SK-N-SH (cell line): ENCODE measurements at regions of chr11 and their contacts with region 1.

Region 1: GRCh38 chr11:78961247-78961646 is 386.6 kb upstream of the NARS2 start:
- DNase-seq: peak; percentile 66
- H3K4me3 ChIP-seq: peak overlapping the region; percentile 58 to 68; a peak in 3 of 4 replicates
- H3K27ac ChIP-seq: peak overlapping the region in 1 of 2 experiments; percentile 87; a peak in 2 of 4 replicates
- H3K4me1 ChIP-seq: peaks cover 10 to 46% of the 10 kb centered on the region in 2 experiments; a peak in 3 of 4 replicates
- H3K27me3 ChIP-seq: no peaks in the 10 kb centered on the region
- CTCF ChIP-seq: peak; percentile 58
- EP300 ChIP-seq: no peak
- RAD21 ChIP-seq: peak; percentile 81

Region 2: DNA sequence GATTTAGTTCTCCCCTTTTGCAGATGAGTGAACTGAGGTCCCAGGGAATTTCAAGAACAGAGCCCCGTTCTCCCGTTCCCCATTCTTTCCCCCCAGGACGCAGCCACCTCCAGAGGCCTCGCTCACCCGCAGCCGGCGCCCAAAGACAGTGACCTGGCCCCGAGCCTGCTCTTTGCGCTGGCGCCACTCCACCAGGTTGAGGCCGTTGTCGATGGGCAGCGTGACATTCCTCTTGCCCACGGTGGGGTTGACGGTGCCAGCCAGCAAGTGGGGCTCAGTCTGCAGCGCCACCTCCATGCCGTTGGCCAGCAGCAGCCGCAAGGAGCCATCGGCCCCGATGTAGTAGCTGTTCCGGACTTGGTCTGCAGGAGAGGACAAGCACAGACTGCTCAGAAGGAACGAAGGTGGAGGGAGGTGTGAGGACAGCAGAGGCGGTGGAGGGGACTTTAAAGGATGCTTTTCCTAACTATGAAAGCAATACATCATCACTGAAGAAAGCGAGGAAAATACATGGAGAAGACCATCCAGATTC is 285.2 kb before region 1 on chr11:
- CTCF ChIA-PET with region 1: no interaction called
- POLR2A ChIA-PET with region 1: no interaction called
- DNase-seq: no peak
- H3K4me3 ChIP-seq: no peak overlapping the region
- H3K27ac ChIP-seq: no peak overlapping the region; a peak in 1 of 4 replicates
- H3K4me1 ChIP-seq: no peaks in the 10 kb centered on the region
- H3K27me3 ChIP-seq: no peaks in the 10 kb centered on the region
- CTCF ChIP-seq: no peak
- EP300 ChIP-seq: no peak
- RAD21 ChIP-seq: no peak

Region 3: DNA sequence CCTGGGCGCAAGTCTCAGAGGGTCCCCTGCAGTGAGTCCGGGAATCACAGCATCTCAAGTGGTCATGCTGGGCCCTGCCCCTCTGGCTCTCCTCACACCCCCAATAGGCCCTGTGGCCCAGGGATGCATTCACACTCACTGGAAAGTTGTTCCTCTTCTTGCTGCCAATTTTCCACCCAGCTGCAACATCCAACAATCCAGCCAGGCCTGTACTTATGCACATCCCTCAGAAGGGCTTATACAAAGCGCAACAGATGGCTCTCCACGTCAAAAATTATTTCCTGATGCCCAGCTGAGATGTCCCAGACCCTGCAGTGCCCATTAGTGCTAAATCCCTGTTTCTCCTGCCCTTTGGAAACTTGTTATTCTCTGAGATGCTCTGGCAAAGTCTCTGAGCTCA is 21.2 kb after region 1 on chr11:
- CTCF ChIA-PET with region 1: interaction called, 18 read pairs
- POLR2A ChIA-PET with region 1: interaction called, 15 read pairs
- DNase-seq: peak; percentile 72
- H3K4me3 ChIP-seq: no peak overlapping the region
- H3K27ac ChIP-seq: peak overlapping the region; percentile 75 to 100
- H3K4me1 ChIP-seq: peaks cover 13 to 68% of the 10 kb centered on the region in 2 experiments; a peak in 3 of 4 replicates
- H3K27me3 ChIP-seq: no peaks in the 10 kb centered on the region
- CTCF ChIP-seq: no peak
- EP300 ChIP-seq: peak; percentile 95 to 100
- RAD21 ChIP-seq: peak; percentile 49

Region 4: GRCh38 chr11:79062814-79063762 is 101.8 kb after region 1 on chr11:
- CTCF ChIA-PET with region 1: interaction called, 11 read pairs
- POLR2A ChIA-PET with region 1: interaction called, 4 read pairs
- DNase-seq: peak; percentile 73
- H3K4me3 ChIP-seq: no peak overlapping the region; a peak in 1 of 4 replicates
- H3K27ac ChIP-seq: peak overlapping the region in 1 of 2 experiments; percentile 73; a peak in 2 of 4 replicates
- H3K4me1 ChIP-seq: peaks cover 6 to 63% of the 10 kb centered on the region in 2 experiments; a peak in 3 of 4 replicates
- H3K27me3 ChIP-seq: no peaks in the 10 kb centered on the region
- CTCF ChIP-seq: peak; percentile 70
- EP300 ChIP-seq: peak in 1 of 2 experiments; percentile 21; a peak in 1 of 4 replicates
- RAD21 ChIP-seq: peak; percentile 72